ENCODE measurements at regions of chr20 and their contacts with region 1.

Region 1: DNA sequence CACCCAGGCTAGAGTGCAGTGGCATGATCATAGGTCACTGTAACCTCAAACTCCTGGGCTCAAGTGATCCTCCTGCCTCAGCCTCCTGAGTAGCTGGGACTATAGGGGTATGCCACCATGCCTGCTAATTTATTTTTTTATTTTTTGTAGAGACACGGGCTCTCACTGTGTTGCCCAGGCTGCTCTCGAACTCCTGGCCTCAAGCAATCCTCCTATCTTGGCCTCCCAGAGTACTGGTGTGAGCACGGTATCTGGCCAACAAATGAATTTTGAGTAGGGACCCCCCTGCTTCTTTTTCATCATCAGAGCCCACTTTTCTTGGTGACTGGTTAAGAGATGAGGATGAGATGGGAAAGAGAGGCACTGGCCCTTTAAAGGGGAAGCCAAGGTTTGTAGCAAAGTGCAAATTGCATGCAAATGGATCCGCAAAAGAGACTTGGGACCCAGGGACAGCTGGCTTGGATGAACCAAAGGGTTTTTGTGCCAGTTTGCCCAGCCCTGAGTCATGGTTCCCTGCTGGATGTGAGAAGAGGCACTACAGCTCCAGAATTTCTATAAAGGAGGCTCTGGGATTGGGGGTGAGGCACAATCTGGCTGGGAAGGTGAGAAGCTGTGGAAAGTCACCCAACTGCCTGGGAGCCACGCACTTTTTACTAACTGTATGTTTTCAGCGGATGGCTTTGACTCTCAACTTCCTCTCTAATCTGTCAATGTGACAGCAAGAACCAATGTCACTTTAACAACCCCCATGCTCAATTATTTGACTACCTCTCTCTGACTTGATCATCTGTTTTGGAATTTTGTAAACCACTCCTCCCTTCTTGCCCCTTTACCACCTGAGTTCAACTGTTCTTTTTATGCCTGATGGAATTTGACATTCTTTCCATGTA is 58.7 kb upstream of the RNF24 start:
- DNase-seq: no peak
- ATAC-seq: no peak

Region 2: GRCh38 chr20:3888622-3889488 is 185.2 kb before region 1 on chr20 and contains the start of gene PANK2:
- intact Hi-C with region 1: loop called in 1 of 2 experiments (anchors 5 kb)
- DNase-seq: peak; percentile 99
- ATAC-seq: peak; percentile 97 to 99
- total RNA-seq, gene PANK2: 18.7 to 23.8 TPM

Measured in left cardiac atrium (tissue), 4 donors.